Right cardiac atrium (tissue), 5 donors: ENCODE measurements at regions of chr11 and their contacts with region 1.

Region 1: GRCh38 chr11:94417386-94417987 is 16.3 kb upstream of the GPR83 start:
- DNase-seq: no peak
- ATAC-seq: no peak
- H3K4me3 ChIP-seq: no peak overlapping the region
- H3K27ac ChIP-seq: no peak overlapping the region
- H3K4me1 ChIP-seq: no peaks in the 10 kb centered on the region
- H3K27me3 ChIP-seq: no peaks in the 10 kb centered on the region

Region 2: GRCh38 chr11:93895106-93895862 is 522.2 kb before region 1 on chr11:
- intact Hi-C with region 1: loop called in 2 of 4 experiments (anchors 10 kb)
- DNase-seq: no peak
- ATAC-seq: peak; percentile 72 to 77
- H3K4me3 ChIP-seq: no peak overlapping the region
- H3K27ac ChIP-seq: no peak overlapping the region
- H3K4me1 ChIP-seq: no peaks in the 10 kb centered on the region
- H3K27me3 ChIP-seq: no peaks in the 10 kb centered on the region

Region 3: DNA sequence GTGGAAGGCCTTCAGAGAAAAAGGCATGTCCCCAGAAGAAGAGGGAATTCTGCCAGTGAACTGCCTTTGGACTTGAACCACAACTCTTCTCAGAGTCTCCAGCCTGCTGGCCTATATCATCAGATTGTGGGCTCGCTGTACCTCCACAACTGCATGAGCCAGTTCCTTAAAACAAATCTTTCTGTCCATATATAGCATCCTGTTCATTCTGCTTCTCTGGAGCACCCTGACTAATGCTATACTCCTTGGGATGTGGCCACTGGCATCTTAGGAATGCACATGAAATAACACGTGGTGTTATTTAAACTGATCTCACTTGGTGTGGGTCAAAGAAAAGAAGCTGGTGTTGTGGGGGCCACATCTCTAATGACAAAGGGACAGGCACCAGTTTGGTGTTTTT is 508.8 kb before region 1 on chr11:
- intact Hi-C with region 1: loop called in 1 of 4 experiments (anchors 10 kb)
- DNase-seq: no peak
- ATAC-seq: no peak
- H3K4me3 ChIP-seq: no peak overlapping the region
- H3K27ac ChIP-seq: no peak overlapping the region
- H3K4me1 ChIP-seq: no peaks in the 10 kb centered on the region
- H3K27me3 ChIP-seq: no peaks in the 10 kb centered on the region

Region 4: GRCh38 chr11:94183886-94184264 is 233.6 kb before region 1 on chr11:
- intact Hi-C with region 1: loop called in 1 of 4 experiments (anchors 10 kb)
- DNase-seq: peak; percentile 49 to 86 (median 83)
- ATAC-seq: peak; percentile 76 to 79
- H3K4me3 ChIP-seq: no peak overlapping the region
- H3K27ac ChIP-seq: no peak overlapping the region
- H3K4me1 ChIP-seq: no peaks in the 10 kb centered on the region
- H3K27me3 ChIP-seq: no peaks in the 10 kb centered on the region

Region 5: GRCh38 chr11:94673951-94674491 is 256.5 kb after region 1 on chr11:
- intact Hi-C with region 1: no loop called
- DNase-seq: no peak
- ATAC-seq: peak in 1 of 2 donors; percentile 78
- H3K4me3 ChIP-seq: no peak overlapping the region
- H3K27ac ChIP-seq: no peak overlapping the region
- H3K4me1 ChIP-seq: peaks cover 3% of the 10 kb centered on the region
- H3K27me3 ChIP-seq: no peaks in the 10 kb centered on the region